HEK293 (cell line): ENCODE measurements at regions of chr16 and their contacts with region 1.

Region 1: DNA sequence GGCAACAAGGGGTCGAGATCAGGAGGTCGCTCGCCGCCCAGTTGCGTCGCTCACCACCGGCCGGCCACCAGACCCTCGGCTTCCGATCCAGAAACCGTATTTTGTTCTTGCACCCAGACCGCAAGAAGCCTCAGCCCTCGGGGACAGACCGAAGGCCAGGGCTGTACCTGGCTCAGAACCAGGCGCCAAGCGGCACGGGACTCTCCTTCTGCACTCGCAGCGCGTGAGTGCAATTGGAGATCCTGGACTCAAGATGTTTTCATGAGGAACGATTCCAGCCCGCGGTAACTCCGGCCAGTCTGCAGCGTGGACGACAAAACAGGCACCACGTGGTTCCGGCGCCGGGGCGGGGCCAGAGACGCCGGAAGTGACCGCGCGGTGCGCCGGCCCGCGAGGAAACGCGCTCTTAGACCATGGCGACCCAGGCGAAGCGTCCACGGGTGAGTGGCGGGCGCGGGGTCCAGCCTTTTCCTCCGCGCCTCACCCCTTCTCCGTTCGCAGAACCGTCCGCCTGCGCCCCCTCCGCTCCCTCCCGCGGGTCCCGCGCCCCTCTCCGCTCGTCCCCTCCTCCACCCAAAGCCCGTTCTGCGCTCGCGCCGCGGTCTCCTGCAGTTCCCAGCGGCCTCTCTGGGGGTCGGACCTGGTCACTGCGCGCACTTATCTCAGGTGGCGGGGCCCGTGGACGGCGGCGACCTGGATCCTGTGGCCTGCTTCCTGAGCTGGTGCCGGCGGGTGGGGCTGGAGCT is at the start of gene SETD6:
- H3K4me3 ChIP-seq: peak within 1 kb of the TSS; percentile 78
- H3K27ac ChIP-seq: peak within 1 kb of the TSS; percentile 83
- H3K4me1 ChIP-seq: peaks cover 4% of the 10 kb centered on the region; the same call in 1 of the 2 replicates
- CTCF ChIP-seq: peak; percentile 90

Region 2: DNA sequence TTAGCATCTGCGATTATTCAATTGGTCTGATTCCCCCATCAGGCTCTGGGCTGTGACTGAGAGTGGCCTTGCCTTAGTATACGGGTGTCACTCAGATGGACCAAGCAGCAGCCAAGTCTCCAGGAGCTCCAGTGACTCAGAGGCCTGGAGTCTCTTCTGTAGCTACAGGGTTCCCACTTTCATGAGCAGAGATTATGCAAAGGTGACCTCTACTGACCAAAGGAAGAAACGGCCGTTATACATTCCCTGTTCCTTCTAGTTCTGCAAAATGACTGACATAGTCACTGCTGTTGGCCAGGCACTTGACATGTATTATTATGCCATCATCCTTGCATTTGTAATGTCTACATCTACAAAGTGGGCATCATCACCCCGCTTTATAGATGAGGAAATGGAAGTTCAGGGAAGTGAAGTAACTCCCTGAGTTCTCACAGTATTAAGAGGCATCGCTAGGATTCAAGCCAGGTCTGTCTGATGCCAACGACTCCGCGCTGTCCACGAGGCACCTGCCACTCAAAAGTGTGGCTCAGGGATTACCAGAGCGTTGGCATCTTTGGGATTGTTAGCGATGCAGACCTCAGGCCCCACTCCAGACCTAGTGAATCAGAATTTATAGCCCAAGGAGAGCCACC is 146.0 kb after region 1 on chr16:
- CTCF ChIA-PET with region 1: interaction called, 12 read pairs
- POLR2A ChIA-PET with region 1: interaction called, 3 read pairs
- H3K4me3 ChIP-seq: no peak overlapping the region
- H3K27ac ChIP-seq: no peak overlapping the region
- H3K4me1 ChIP-seq: no peaks in the 10 kb centered on the region
- CTCF ChIP-seq: peak; percentile 66

Region 3: DNA sequence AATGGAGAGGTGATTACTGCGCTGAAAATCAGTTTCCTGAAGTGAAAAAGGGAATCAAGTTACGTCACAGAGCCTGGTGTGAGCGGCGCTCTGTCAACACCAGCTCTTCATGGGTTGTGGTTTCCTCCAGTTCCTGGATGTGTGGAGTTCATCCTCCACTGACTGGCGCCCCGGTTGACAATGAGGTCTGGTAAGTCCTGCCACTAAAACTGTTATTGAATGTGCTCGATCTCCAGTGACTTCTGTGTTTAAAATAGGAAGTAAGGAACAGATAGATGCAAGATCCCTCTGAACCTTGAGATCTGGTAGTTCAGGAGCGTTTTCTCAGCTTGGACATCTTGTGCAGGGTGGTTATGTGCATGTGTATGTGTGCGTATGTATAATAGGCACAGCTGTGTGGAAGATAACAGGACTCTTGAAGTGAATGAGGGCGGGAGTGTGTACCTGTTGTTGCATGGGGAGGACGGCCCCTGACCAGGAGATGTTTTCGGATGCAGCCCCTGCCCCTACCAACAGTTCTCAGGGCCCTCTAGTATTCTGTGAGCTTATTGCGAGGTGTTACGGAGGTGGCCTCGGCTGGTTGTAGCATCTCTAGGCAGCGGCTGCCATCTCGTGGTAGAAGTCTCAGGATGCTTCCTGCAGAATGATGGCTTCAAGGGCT is 240.8 kb after region 1 on chr16:
- CTCF ChIA-PET with region 1: interaction called, 12 read pairs
- POLR2A ChIA-PET with region 1: interaction called, 3 read pairs
- H3K4me3 ChIP-seq: no peak overlapping the region
- H3K27ac ChIP-seq: no peak overlapping the region
- H3K4me1 ChIP-seq: no peaks in the 10 kb centered on the region
- CTCF ChIP-seq: peak; percentile 74